ENCODE measurements at regions of chr1 and their contacts with region 1.

Region 1: GRCh38 chr1:36149237-36149972 is at the start of gene TRAPPC3:
- DNase-seq: peak; percentile 95 to 99
- ATAC-seq: peak; percentile 87 to 91
- H3K4me3 ChIP-seq: peak within 1 kb of the TSS; percentile 59
- H3K27ac ChIP-seq: peak within 1 kb of the TSS; percentile 98
- H3K4me1 ChIP-seq: peaks cover 31% of the 10 kb centered on the region
- CTCF ChIP-seq: peak; percentile 86
- EP300 ChIP-seq: 0 out of 5 replicates have a peak, but pooled peaks of 1 of the 2 experiments have one; percentile 27
- POLR2A ChIP-seq: peak; percentile 82
- RAD21 ChIP-seq: peak; percentile 94 to 99
- polyA plus RNA-seq, gene TRAPPC3: 62.2 and 67.0 TPM in 2 replicates

Region 2: GRCh38 chr1:36109041-36109679 is 40.2 kb before region 1 on chr1:
- CTCF ChIA-PET with region 1: interaction called, 12 read pairs
- POLR2A ChIA-PET with region 1: no interaction called
- DNase-seq: no peak
- ATAC-seq: peak in 1 of 2 experiments; percentile 30; a peak in 2 of 6 replicates
- H3K4me3 ChIP-seq: no peak overlapping the region
- H3K27ac ChIP-seq: no peak overlapping the region
- H3K4me1 ChIP-seq: no peaks in the 10 kb centered on the region
- CTCF ChIP-seq: no peak
- EP300 ChIP-seq: no peak
- POLR2A ChIP-seq: no peak
- RAD21 ChIP-seq: no peak

Region 3: GRCh38 chr1:36160949-36161485 is 11.6 kb after region 1 on chr1:
- CTCF ChIA-PET with region 1: interaction called, 82 read pairs
- POLR2A ChIA-PET with region 1: interaction called, 19 read pairs
- DNase-seq: peak; percentile 47 to 48
- ATAC-seq: peak; percentile 65 to 76
- H3K4me3 ChIP-seq: peak overlapping the region; percentile 33
- H3K27ac ChIP-seq: peak overlapping the region; percentile 77 to 83
- H3K4me1 ChIP-seq: peaks cover 61% of the 10 kb centered on the region
- CTCF ChIP-seq: peak; percentile 37
- EP300 ChIP-seq: no peak
- POLR2A ChIP-seq: no peak
- RAD21 ChIP-seq: peak in 1 of 2 experiments; percentile 14; a peak in 1 of 5 replicates

Region 4: GRCh38 chr1:36187800-36188593 is 38.6 kb after region 1 on chr1:
- CTCF ChIA-PET with region 1: interaction called, 114 read pairs
- POLR2A ChIA-PET with region 1: interaction called, 21 read pairs
- DNase-seq: peak; percentile 81 to 88
- ATAC-seq: peak; percentile 96 to 98
- H3K4me3 ChIP-seq: no peak overlapping the region
- H3K27ac ChIP-seq: peak overlapping the region; percentile 88 to 90
- H3K4me1 ChIP-seq: peaks cover 8% of the 10 kb centered on the region
- CTCF ChIP-seq: peak; percentile 68
- EP300 ChIP-seq: no peak
- POLR2A ChIP-seq: no peak
- RAD21 ChIP-seq: peak; percentile 89 to 92

Region 5: DNA sequence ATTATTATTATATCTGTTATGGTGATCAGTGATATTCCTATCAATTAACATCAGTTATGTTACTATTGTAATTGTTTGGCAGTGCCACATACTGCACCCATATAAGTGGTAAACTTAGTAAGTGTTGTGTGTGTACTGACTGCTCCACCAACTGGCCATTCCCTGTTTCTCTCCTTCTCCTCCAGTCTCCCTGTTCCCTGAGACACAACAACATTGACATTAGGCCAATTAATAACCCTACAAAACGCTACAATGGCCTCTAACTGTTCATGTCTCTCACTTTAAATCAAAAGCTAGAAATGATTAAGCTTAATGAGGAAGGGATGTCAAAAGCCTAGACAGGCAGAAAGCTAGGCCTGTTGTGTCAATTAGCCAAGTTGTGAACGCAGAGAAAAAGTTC is 68.3 kb after region 1 on chr1:
- CTCF ChIA-PET with region 1: interaction called, 14 read pairs
- POLR2A ChIA-PET with region 1: interaction called, 23 read pairs
- DNase-seq: peak in 1 of 2 experiments; percentile 55
- ATAC-seq: peak; percentile 89 to 91
- H3K4me3 ChIP-seq: no peak overlapping the region
- H3K27ac ChIP-seq: peak overlapping the region; percentile 13 to 74; a peak in 4 of 6 replicates
- H3K4me1 ChIP-seq: 0 out of 3 replicates have a peak, but pooled peaks cover 5% of the 10 kb centered on the region
- CTCF ChIP-seq: peak; percentile 42; the same call in 2 of the 3 replicates
- EP300 ChIP-seq: no peak
- POLR2A ChIP-seq: no peak
- RAD21 ChIP-seq: peak; percentile 57 to 66

Region 6: GRCh38 chr1:36279110-36279788 is 129.8 kb after region 1 on chr1:
- CTCF ChIA-PET with region 1: interaction called, 20 read pairs
- POLR2A ChIA-PET with region 1: no interaction called
- DNase-seq: no peak
- ATAC-seq: no peak
- H3K4me3 ChIP-seq: no peak overlapping the region
- H3K27ac ChIP-seq: no peak overlapping the region
- H3K4me1 ChIP-seq: peaks cover 29% of the 10 kb centered on the region; the same call in 2 of the 3 replicates
- CTCF ChIP-seq: no peak
- EP300 ChIP-seq: no peak
- POLR2A ChIP-seq: no peak
- RAD21 ChIP-seq: no peak

Region 7: GRCh38 chr1:36300526-36300925 is 151.1 kb after region 1 on chr1:
- CTCF ChIA-PET with region 1: interaction called, 10 read pairs
- POLR2A ChIA-PET with region 1: interaction called, 3 read pairs
- DNase-seq: no peak
- ATAC-seq: no peak
- H3K4me3 ChIP-seq: no peak overlapping the region
- H3K27ac ChIP-seq: peak overlapping the region; percentile 25 to 56; a peak in 3 of 6 replicates
- H3K4me1 ChIP-seq: peaks cover 32% of the 10 kb centered on the region
- CTCF ChIP-seq: no peak
- EP300 ChIP-seq: no peak
- POLR2A ChIP-seq: no peak
- RAD21 ChIP-seq: no peak

Measured in A549 (cell line).